ENCODE measurements at regions of chr13 and their contacts with region 1.

Region 1: DNA sequence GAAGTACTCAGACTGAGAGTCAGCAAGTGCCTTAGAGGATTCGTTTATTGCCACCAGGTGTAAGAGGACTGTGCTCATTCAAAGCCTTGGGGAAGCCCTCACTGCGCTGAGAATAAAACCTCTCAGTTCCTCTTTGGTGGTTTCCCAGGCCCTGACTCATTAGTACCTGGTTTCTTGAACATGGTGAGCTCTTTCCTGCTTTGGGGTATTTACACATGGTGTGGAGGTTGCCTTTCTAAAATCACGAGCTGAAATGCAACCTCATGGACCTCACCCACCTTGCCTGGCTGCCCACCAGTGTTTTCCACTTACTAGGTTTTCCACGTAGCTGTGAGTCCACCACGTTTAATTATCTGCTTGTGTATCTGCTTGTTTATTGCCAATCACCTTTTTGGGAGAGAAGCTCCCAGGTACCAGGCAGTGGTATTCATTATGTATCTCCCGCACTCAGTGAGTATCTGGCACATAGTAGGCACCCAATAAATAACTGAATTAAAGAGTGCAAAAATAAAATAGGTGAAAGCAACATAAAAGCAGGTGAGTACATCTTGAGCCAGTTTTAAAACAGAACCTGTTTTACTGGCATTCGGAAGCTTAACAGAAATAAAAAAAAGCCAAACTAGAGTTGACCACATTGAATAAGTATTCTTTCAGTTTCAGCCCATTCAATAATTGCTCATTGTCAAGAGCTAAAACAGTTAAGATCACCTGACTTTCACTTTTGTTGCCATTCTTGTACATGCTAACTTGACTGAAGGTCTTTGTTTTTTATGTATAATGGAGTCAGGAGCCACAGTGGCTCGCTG is 533.0 kb downstream of the MYO16 start:
- DNase-seq: peak; percentile 48
- ATAC-seq: peak; percentile 94
- H3K4me3 Mint-ChIP-seq: peak overlapping the region; percentile 69
- H3K27ac Mint-ChIP-seq: peak overlapping the region; percentile 84
- H3K4me1 Mint-ChIP-seq: peaks cover 42% of the 10 kb centered on the region
- H3K27me3 Mint-ChIP-seq: peaks cover 18% of the 10 kb centered on the region
- CTCF ChIP-seq: no peak

Region 2: GRCh38 chr13:108218044-108218974 is 944.1 kb before region 1 on chr13 and contains the start of gene ABHD13:
- CTCF ChIA-PET with region 1: no interaction called
- POLR2A ChIA-PET with region 1: interaction called, 3 read pairs
- intact Hi-C with region 1: loop called (anchors 1 kb)
- DNase-seq: peak; percentile 92
- ATAC-seq: peak; percentile 62
- H3K4me3 Mint-ChIP-seq: peak within 1 kb of the TSS; percentile 96
- H3K27ac Mint-ChIP-seq: peak within 1 kb of the TSS; percentile 96
- H3K4me1 Mint-ChIP-seq: peaks cover 70% of the 10 kb centered on the region
- H3K27me3 Mint-ChIP-seq: no peaks in the 10 kb centered on the region
- CTCF ChIP-seq: no peak
- total RNA-seq, gene ABHD13: 9.4 and 10.9 TPM in 2 replicates

Region 3: DNA sequence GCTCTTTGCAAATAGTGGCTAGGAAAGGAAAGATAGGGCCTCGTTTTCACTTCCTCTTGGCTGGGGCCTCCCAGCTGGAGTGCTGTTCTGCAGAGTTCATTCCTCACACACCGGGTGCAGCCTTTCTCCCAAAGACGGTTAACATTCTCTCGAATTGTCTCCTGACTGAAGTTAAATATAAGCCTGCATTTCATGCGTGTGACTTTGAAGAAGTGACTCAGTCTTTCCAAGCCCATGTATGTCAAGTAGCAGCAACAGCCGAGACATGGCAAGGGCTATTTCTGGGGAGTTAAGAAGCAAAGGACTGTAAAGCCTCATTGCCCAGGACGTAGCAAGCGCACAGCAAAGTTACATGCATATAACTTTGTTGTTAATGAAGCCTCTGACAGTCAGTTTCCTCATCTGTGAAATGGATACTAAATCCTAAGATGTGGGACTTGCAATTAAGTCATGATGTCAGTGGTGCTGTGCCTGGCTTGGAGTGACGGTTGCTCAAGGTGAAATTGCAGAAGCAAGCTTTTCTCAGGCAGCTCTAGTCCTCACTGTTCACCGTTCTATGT is 30.7 kb before region 1 on chr13:
- CTCF ChIA-PET with region 1: no interaction called
- POLR2A ChIA-PET with region 1: interaction called, 5 read pairs
- intact Hi-C with region 1: loop called (anchors 1 kb)
- DNase-seq: no peak
- ATAC-seq: peak; percentile 76
- H3K4me3 Mint-ChIP-seq: no peak overlapping the region
- H3K27ac Mint-ChIP-seq: peak overlapping the region; percentile 43
- H3K4me1 Mint-ChIP-seq: peaks cover 22% of the 10 kb centered on the region
- H3K27me3 Mint-ChIP-seq: no peaks in the 10 kb centered on the region
- CTCF ChIP-seq: no peak

Region 4: DNA sequence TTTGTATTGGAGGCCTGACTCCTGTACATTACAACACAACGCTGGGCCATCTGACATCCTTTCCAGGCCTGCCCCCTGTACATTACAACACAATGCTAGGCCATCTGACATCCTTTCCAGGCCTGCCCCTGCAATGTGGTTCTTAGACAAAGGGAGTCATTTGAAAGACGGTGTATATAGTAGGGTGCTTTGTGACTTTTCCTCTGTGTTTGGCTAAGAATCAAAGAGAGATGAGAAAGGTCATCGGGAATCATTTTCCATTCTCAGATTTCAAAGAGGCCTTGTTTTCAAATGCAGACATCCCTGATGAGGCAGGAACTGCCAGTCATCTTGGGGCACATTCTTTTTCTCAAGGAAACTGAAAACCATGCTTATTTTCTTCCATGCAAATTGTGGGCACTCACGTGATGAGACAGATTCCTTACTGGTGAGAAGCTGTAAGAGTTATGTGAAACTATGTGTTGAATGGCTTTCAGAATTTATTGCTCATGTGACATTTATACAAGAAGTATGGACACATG is 18.5 kb after region 1 on chr13:
- CTCF ChIA-PET with region 1: no interaction called
- POLR2A ChIA-PET with region 1: no interaction called
- intact Hi-C with region 1: loop called (anchors 2 kb)
- DNase-seq: no peak
- ATAC-seq: no peak
- H3K4me3 Mint-ChIP-seq: no peak overlapping the region
- H3K27ac Mint-ChIP-seq: no peak overlapping the region
- H3K4me1 Mint-ChIP-seq: no peaks in the 10 kb centered on the region
- H3K27me3 Mint-ChIP-seq: no peaks in the 10 kb centered on the region
- CTCF ChIP-seq: no peak

Region 5: GRCh38 chr13:109215377-109215776 is 52.9 kb after region 1 on chr13:
- CTCF ChIA-PET with region 1: no interaction called
- POLR2A ChIA-PET with region 1: no interaction called
- intact Hi-C with region 1: loop called (anchors 5 kb)
- DNase-seq: no peak
- ATAC-seq: no peak
- H3K4me3 Mint-ChIP-seq: no peak overlapping the region
- H3K27ac Mint-ChIP-seq: no peak overlapping the region
- H3K4me1 Mint-ChIP-seq: no peaks in the 10 kb centered on the region
- H3K27me3 Mint-ChIP-seq: no peaks in the 10 kb centered on the region
- CTCF ChIP-seq: no peak

Region 6: DNA sequence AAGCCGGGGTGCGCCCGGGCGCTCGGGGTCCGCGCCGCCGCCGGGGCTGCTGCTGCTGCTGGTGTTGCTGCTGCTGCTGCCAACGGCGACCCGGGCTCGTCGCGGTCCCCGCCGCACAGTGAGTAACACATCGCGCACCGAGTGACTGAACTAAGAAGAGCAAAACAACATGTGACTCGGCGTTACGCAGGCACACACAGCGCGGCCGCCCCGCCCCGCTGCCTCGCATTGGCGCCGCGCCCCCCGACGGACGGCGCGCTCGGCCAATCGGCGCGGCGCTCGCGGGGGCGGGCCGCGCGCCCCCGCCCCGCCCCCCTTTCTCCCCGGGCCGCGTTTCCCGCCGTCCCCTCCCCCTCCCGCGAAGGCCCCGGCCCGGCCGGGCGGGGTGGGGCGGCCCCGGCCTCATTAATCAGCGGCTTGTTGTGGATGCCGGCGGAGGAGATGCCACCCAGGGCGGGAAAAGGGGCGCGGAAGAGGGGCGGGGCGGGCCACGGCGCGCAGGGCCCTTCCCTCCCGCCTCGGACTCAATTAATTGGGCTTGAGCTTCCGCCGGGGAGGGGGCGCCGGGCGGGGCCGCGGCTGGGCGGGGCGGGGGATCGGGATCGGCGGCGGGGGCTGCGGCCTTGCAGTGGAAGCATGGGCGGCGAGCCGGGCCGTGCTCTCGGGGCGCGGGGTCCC is 624.1 kb after region 1 on chr13 and contains the start of gene IRS2:
- CTCF ChIA-PET with region 1: interaction called, 3 read pairs
- POLR2A ChIA-PET with region 1: interaction called, 9 read pairs
- intact Hi-C with region 1: loop called (anchors 1 kb)
- DNase-seq: peak; percentile 84
- ATAC-seq: peak; percentile 88
- H3K4me3 Mint-ChIP-seq: peak within 1 kb of the TSS; percentile 86
- H3K27ac Mint-ChIP-seq: peak within 1 kb of the TSS; percentile 56
- H3K4me1 Mint-ChIP-seq: peaks cover under 1% of the 10 kb centered on the region
- H3K27me3 Mint-ChIP-seq: peaks cover 4% of the 10 kb centered on the region
- CTCF ChIP-seq: no peak
- total RNA-seq, gene IRS2: 4.2 and 4.4 TPM in 2 replicates

Region 7: GRCh38 chr13:110471833-110472162 is 1309.3 kb after region 1 on chr13:
- CTCF ChIA-PET with region 1: no interaction called
- POLR2A ChIA-PET with region 1: interaction called, 4 read pairs
- intact Hi-C with region 1: loop called (anchors 1 kb)
- DNase-seq: peak; percentile 59
- ATAC-seq: peak; percentile 93
- H3K4me3 Mint-ChIP-seq: peak overlapping the region; percentile 73
- H3K27ac Mint-ChIP-seq: peak overlapping the region; percentile 83
- H3K4me1 Mint-ChIP-seq: peaks cover 55% of the 10 kb centered on the region
- H3K27me3 Mint-ChIP-seq: no peaks in the 10 kb centered on the region
- CTCF ChIP-seq: no peak